ENCODE measurements at regions of chr2 and their contacts with region 1.

Region 1: GRCh38 chr2:37156857-37157714 is at the start of gene EIF2AK2:
- DNase-seq: peak; percentile 67 to 91 (median 84)
- ATAC-seq: peak; percentile 97
- H3K4me3 ChIP-seq: peak within 1 kb of the TSS; percentile 82 to 94
- H3K4me3 Mint-ChIP-seq: peak within 1 kb of the TSS; percentile 94
- H3K27ac ChIP-seq: peak within 1 kb of the TSS; percentile 62 to 76
- H3K27ac Mint-ChIP-seq: peak within 1 kb of the TSS; percentile 91
- H3K4me1 ChIP-seq: peaks cover 27% of the 10 kb centered on the region
- H3K4me1 Mint-ChIP-seq: peaks cover 50% of the 10 kb centered on the region
- H3K27me3 ChIP-seq: no peaks in the 10 kb centered on the region
- H3K27me3 Mint-ChIP-seq: no peaks in the 10 kb centered on the region
- CTCF ChIP-seq: no peak
- total RNA-seq, gene EIF2AK2: 30.1 to 33.7 TPM

Region 2: GRCh38 chr2:36966370-36967235 is 190.5 kb before region 1 on chr2 and contains the start of gene STRN:
- CTCF ChIA-PET with region 1: no interaction called
- POLR2A ChIA-PET with region 1: interaction called, 6 read pairs
- intact Hi-C with region 1: loop called in 1 of 2 experiments (anchors 5 kb)
- DNase-seq: peak; percentile 94 to 99 (median 98)
- ATAC-seq: peak; percentile 91
- H3K4me3 ChIP-seq: peak within 1 kb of the TSS; percentile 69 to 96
- H3K4me3 Mint-ChIP-seq: peak within 1 kb of the TSS; percentile 98
- H3K27ac ChIP-seq: peak within 1 kb of the TSS; percentile 76 to 97
- H3K27ac Mint-ChIP-seq: peak within 1 kb of the TSS; percentile 99
- H3K4me1 ChIP-seq: peaks cover 19% of the 10 kb centered on the region
- H3K4me1 Mint-ChIP-seq: peaks cover 50% of the 10 kb centered on the region
- H3K27me3 ChIP-seq: no peaks in the 10 kb centered on the region
- H3K27me3 Mint-ChIP-seq: no peaks in the 10 kb centered on the region
- CTCF ChIP-seq: no peak
- total RNA-seq, gene STRN: 15.6 to 17.4 TPM

Region 3: DNA sequence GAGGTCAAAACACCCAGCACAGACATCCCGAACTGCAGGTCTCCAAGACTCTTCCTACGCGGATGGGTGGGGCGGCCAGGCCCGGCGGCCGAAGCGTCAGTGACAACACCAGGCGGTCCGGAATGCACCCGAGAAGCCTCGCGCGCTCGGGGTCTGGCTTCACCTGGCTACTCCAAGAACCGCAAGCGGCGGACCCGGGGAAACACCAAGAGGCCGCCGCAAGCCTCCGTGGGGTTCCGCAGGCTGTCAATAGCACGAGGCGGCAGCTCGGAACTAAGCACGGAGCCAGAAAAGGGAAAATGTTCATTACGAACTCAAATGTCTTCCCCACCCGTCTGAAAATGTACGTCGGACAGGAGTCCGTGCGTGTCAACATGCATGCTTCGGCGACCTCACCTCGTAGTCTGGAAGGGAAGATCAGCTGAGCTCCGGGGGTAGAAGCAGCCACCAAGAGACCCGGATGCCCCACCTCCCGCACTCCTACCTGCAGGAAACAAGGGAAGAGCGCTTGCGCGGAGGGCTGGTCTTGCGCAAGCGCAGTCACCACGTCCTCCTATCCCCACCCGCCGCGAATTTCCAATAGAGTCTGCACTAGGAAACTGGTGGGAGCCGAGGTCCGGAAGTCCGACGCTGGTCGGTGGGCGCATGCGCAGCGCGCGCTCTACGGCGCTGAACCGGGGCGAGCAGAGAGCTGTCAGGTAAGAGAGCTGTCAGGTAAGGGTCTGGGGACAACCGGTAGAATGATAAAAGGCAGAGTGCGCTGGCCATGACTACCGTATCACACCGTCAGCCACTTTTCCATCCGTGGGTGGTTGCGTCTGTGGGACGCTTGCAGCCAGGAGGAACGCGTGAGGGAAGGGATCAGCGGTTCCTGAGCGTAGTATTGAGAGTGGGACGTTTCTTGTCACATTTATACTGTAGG is 73.0 kb before region 1 on chr2 and contains the starts of genes GPATCH11 and HEATR5B:
- CTCF ChIA-PET with region 1: no interaction called
- POLR2A ChIA-PET with region 1: no interaction called
- intact Hi-C with region 1: loop called (anchors 2 kb)
- DNase-seq: peak; percentile 73 to 97 (median 92)
- ATAC-seq: peak; percentile 84
- H3K4me3 ChIP-seq: peak within 1 kb of the TSS; percentile 76 to 99
- H3K4me3 Mint-ChIP-seq: no peak within 1 kb of the TSS
- H3K27ac ChIP-seq: peak within 1 kb of the TSS; percentile 67 to 85
- H3K27ac Mint-ChIP-seq: peak within 1 kb of the TSS; percentile 14
- H3K4me1 ChIP-seq: peaks cover 51% of the 10 kb centered on the region
- H3K4me1 Mint-ChIP-seq: peaks cover 50% of the 10 kb centered on the region
- H3K27me3 ChIP-seq: no peaks in the 10 kb centered on the region
- H3K27me3 Mint-ChIP-seq: no peaks in the 10 kb centered on the region
- CTCF ChIP-seq: no peak
- total RNA-seq, gene GPATCH11: 5.4 to 6.4 TPM
- total RNA-seq, gene HEATR5B: 9.9 to 11.0 TPM

Region 4: GRCh38 chr2:37168217-37168981 is 11.3 kb after region 1 on chr2:
- CTCF ChIA-PET with region 1: interaction called, 15 read pairs
- POLR2A ChIA-PET with region 1: interaction called, 3 read pairs
- intact Hi-C with region 1: no loop called
- DNase-seq: peak in 3 of 9 experiments; percentile 10 to 62 (median 51)
- ATAC-seq: peak; percentile 71
- H3K4me3 ChIP-seq: no peak overlapping the region
- H3K4me3 Mint-ChIP-seq: no peak overlapping the region
- H3K27ac ChIP-seq: no peak overlapping the region
- H3K27ac Mint-ChIP-seq: no peak overlapping the region
- H3K4me1 ChIP-seq: no peaks in the 10 kb centered on the region
- H3K4me1 Mint-ChIP-seq: no peaks in the 10 kb centered on the region
- H3K27me3 ChIP-seq: peaks cover 0 to 2% of the 10 kb centered on the region in 2 experiments
- H3K27me3 Mint-ChIP-seq: peaks cover 2% of the 10 kb centered on the region
- CTCF ChIP-seq: peak; percentile 79

Region 5: DNA sequence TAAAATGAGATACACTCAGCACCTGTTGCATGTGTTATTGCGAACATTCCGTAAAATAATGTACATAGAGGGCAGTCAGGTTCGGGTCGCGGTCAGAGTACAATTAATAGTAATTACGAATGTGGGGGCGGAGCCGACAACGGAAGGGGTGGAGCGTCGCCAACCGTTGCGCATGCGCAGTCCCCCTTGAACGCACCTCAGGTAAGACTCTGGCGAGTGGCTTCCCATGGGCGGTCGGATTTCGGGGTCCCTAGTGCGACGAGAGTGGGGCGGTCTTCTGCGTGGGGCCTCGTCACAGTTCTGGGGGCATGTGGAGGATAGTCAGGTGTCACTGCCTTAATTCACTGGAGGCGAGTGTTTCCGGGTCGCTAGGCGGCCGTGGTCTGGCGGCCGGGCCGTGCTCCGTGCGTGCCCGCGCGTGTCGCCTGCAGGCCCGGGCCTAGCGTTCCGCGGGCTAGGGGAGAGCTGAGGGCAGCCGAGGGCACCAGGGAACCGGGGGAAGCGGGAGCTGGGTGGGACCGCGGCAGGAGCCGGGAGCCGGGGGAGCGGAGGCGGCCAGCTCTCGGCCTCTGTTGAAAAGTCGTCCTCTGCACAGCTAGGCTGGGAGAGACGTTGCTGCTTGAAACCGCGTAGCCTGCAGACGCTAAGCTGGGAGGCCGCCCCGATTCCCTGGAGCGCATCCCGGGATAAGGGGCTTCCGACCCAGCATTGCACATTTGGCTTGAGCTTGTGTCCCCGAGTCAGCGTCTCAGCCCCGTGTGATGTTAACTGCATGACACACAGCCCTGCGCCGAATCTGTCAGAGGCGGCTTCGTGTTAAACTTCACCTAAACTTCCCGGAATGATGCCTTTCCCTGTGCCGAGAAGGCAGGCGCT is 39.5 kb after region 1 on chr2 and contains the start of gene CEBPZOS:
- CTCF ChIA-PET with region 1: no interaction called
- POLR2A ChIA-PET with region 1: interaction called, 4 read pairs
- intact Hi-C with region 1: loop called (anchors 1 to 2 kb)
- DNase-seq: peak; percentile 81 to 96 (median 91)
- ATAC-seq: peak; percentile 89
- H3K4me3 ChIP-seq: peak within 1 kb of the TSS; percentile 74 to 78
- H3K4me3 Mint-ChIP-seq: peak within 1 kb of the TSS; percentile 96
- H3K27ac ChIP-seq: peak within 1 kb of the TSS; percentile 74 to 78
- H3K27ac Mint-ChIP-seq: peak within 1 kb of the TSS; percentile 96
- H3K4me1 ChIP-seq: peaks cover 24% of the 10 kb centered on the region
- H3K4me1 Mint-ChIP-seq: peaks cover 35% of the 10 kb centered on the region
- H3K27me3 ChIP-seq: no peaks in the 10 kb centered on the region
- H3K27me3 Mint-ChIP-seq: no peaks in the 10 kb centered on the region
- CTCF ChIP-seq: no peak
- total RNA-seq, gene CEBPZOS: 17.5 to 18.2 TPM

Region 6: DNA sequence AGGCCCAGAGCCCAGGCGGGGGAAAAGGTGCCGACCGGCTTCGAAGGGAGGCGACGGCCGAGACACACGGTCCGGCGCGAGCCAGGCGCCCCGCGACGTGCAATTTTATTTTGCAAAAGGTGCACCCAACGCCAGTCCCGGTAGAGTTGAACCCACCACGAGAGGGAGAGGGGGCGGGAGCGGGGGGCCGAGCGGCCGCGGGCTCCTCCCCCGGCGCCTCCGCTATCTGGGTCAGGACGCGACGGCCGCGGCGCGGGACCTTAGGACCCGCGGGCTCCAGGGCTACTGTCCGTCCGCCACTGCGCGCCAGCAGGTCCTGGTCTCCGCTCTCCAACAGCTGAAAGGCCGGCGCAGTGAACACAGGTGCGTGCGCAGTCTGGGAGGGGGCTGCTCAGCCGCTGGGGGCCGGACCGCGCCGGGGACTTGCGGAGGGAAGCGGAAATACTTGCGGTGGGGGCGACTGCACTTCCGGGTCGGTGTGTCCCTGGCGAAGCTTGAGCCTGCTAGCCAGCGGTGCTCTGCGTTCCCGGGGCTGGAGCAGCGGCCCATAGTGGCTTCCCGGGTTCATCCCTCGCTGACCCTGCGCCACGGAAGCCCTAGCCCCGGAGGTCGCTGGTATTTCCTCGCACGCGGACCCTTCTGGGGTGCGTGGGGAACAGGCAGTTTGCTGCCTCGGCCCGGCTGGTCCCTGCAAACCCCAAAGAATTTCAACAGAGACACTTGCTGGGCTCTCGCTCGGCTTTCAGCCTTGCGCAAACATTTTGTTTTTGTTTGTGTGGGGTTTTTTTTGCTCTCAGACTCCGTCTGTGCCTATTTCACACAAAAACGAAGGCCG is 768.2 kb after region 1 on chr2 and contains the start of gene RMDN2:
- CTCF ChIA-PET with region 1: no interaction called
- POLR2A ChIA-PET with region 1: no interaction called
- intact Hi-C with region 1: loop called in 1 of 2 experiments (anchors 2 kb)
- DNase-seq: peak; percentile 37 to 92 (median 77)
- ATAC-seq: peak; percentile 80
- H3K4me3 ChIP-seq: peak within 1 kb of the TSS; percentile 68 to 82
- H3K4me3 Mint-ChIP-seq: peak within 1 kb of the TSS; percentile 92
- H3K27ac ChIP-seq: peak within 1 kb of the TSS; percentile 68 to 79
- H3K27ac Mint-ChIP-seq: peak within 1 kb of the TSS; percentile 92
- H3K4me1 ChIP-seq: peaks cover 11% of the 10 kb centered on the region
- H3K4me1 Mint-ChIP-seq: peaks cover 32% of the 10 kb centered on the region
- H3K27me3 ChIP-seq: peaks cover 0 to 2% of the 10 kb centered on the region in 2 experiments
- H3K27me3 Mint-ChIP-seq: no peaks in the 10 kb centered on the region
- CTCF ChIP-seq: no peak
- total RNA-seq, gene RMDN2: 3.4 to 3.9 TPM